ENCODE measurements at regions of chr7 and their contacts with region 1.

Region 1: DNA sequence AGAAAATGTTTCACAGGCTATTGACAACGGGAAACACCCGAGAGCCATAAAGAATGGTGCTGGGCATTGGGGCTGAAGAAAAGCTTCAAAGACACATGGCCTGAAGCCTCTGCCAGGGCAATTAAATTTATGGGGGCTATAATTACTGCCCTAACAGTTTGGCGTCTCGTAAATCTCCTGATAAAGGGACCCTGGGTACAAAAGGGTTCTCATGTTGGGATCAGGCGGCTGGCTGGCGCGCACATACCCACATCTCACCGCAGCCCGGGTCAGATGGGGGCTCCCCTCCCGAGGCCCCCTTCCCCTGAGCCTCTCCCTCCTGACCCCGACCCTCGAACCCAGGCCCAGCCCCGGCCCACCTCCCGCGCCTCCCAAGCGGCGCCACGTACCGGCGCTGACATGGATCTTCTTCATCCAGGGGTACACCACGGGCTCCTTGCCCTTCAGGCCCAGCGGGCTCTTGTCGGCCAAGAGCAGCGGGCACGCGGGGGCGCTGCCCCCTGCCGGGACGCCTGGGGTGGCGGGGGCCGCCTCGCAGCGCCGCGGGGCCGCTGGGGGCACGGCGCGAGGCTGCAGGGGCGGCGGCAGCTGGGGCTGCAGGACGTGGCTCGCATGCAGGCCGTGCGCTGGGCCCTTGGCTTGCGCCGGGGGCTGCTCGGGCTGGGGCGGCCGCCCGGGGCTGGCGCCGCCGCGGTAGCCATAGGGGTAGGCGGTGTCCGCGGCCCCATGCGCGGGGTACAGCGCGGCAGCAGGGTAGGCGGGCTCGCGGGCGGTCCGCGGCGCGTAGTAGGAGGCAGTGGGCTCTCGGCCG is 623 bp downstream of the HOXA4 start:
- DNase-seq: peak; percentile 72

Region 2: GRCh38 chr7:26413012-26413691 is 716.8 kb before region 1 on chr7:
- in situ Hi-C with region 1: no loop called
- DNase-seq: no peak

Region 3: DNA sequence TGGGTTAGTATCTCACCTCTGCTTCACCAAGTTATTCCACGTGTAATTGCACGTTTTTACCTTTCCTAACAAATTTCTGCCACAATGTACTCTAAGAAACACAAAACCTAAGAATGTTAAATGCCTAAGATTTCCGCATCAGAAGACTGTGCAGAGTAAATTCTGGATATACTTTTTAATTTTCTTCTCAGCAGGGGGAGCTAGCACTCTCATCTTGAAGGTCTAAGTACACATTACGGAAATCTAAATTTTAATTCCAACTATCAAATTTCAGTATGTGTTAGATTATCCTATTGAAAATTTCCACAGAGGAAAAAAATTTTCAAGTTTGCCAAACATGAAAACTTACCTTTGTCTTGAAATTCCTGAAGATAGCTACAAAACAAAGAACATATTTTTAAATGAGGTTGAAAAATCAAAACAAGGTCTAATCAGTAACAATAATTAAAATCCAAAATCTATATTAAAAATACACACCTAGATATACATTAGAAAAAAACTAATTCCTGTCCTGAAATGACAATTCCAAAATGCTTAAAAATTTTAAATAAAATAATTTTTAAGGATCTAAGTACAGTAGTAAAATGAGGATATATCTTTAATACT is 276.0 kb before region 1 on chr7:
- in situ Hi-C with region 1: loop called (anchors 10 kb)
- DNase-seq: peak; percentile 90

Region 4: DNA sequence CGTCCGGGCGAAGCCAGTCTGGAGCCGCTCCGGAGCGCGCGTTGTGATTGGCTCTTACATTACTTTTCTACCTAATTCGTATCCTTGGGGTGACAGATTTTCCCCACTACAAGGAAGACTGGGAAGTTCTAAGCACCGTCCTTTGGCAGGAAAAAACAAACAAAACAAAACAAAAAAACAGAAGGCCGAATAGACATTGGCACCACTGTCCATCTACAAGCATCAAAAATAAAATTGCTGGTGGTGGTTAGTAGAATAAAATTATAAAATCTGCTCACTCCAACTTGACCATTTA is 264.9 kb before region 1 on chr7:
- in situ Hi-C with region 1: no loop called
- DNase-seq: no peak